ENCODE measurements at regions of chr6 and their contacts with region 1.

Region 1: DNA sequence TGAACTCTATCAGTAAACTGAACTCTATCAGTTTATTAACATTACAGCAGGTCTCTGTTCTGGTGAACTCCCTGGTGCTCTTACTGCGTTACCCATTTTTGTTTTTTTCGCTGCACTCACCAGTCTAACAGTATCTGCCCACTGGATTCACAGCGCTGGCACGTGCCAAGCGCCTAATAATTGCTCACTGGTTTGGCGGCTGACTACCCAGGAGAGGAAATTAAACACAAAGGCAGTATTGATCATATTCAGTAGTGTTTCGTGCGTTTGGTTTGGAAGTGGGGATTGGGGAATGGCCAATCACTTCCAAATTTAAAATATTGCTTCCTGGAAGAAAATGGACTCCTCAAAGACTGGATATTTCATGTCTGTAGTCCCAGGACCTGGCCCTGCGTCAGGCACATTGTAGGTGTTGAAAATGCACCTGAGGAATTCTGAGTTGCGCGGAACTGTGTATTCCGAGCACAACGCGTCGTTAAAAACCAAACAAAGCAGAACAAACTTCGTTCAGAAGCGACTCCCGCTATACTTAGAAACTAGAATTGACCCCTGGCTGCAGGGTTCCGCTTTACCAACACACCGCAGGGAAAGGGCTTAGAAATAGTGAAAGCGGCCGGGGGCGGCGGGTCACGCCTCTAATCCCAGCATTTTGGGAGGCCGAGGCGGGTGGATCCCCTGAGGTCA is 1.1 kb upstream of the RPS12 start:
- DNase-seq: peak; percentile 30
- H3K4me3 Mint-ChIP-seq: peak overlapping the region; percentile 99
- H3K27ac Mint-ChIP-seq: peak overlapping the region; percentile 95
- H3K4me1 Mint-ChIP-seq: peaks cover 29% of the 10 kb centered on the region
- H3K27me3 Mint-ChIP-seq: peaks cover 24% of the 10 kb centered on the region

Region 2: DNA sequence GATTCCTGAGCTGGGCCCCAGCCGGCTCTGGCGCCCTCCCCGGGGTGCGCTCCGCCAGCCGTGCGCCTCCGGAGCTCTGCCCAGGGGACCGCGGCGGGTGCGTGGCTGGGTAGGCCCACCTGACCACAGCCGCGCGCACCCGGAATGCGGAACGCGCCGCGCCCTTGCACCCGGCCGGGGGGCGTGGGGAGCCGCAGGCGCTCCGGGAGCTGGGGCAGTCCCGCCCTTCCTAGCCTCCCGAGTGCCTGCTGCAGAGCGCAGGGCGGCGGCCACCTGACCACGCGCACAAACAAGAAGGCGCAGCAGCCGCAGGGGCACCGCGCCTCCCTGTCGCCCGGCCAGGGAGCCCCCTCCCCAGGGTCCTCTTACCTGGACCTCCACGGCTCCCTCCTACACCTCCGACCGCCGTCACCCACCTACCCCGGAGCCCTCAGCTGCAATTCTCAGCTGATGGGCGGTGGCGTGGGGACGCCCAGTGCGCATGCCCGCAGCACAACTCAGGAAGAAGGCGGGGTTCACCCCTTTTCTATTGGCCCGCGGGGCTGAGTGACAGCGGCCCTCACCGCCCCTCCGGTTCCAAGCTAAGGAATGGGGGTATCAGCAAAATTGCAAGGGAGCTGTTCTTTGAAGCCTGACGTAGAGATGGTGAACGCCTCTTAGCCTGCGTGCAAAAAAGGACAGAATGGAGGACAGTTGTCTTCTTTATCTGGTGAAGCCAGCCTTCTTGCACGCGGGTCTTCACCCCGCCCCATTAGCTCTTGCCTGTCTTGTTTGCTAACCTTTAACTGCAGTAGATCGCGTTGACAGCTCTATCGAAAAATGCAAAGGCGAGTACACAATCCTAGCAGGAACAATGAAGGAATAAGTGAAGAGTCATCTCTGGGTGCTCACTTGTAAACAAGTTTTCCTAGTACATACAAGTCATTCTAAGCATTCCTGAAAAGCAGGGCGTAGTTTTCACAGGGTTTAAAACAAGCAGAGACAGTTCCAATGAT is 300.4 kb before region 1 on chr6 and contains the start of gene STX7:
- intact Hi-C with region 1: loop called (anchors 1 kb)
- DNase-seq: peak; percentile 83
- H3K4me3 Mint-ChIP-seq: peak within 1 kb of the TSS; percentile 97
- H3K27ac Mint-ChIP-seq: peak within 1 kb of the TSS; percentile 88
- H3K4me1 Mint-ChIP-seq: peaks cover 24% of the 10 kb centered on the region
- H3K27me3 Mint-ChIP-seq: peaks cover 21% of the 10 kb centered on the region
- total RNA-seq, gene STX7: 18.9 and 21.5 TPM in 2 replicates

Region 3: DNA sequence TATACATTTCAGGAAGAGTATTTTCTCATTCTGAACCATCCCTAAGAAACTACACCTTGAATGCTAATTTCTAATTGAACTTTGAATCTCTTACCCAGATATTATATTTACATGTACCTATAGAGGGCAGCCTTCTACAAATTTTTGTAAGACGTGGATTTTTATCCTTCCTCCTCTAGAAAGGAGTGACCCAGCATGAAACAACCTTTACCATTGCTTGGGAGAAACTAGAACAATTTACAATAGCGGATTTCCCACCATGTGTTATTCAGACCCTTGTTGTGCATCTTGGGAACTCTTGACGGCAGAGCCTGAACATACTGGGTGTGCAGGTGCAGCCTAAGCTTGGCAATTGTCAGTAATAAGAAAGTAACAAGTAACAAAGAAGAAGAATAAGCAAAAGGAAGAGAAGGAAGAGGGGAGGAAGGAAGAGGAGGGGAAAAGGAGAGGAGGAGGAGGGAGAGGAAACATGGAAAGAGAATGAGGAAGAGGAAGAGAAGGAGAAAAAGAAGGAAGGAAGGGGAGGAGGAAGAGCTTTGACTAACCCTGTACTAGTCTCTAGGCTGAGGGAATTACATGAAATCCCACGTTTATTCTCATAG is 143.5 kb before region 1 on chr6:
- intact Hi-C with region 1: loop called (anchors 5 kb)
- DNase-seq: no peak
- H3K4me3 Mint-ChIP-seq: no peak overlapping the region
- H3K27ac Mint-ChIP-seq: no peak overlapping the region
- H3K4me1 Mint-ChIP-seq: peaks cover 6% of the 10 kb centered on the region
- H3K27me3 Mint-ChIP-seq: peaks cover 22% of the 10 kb centered on the region

Region 4: GRCh38 chr6:132798869-132799538 is 14.3 kb before region 1 on chr6:
- intact Hi-C with region 1: loop called (anchors 1 kb)
- DNase-seq: peak; percentile 53
- H3K4me3 Mint-ChIP-seq: peak overlapping the region; percentile 90
- H3K27ac Mint-ChIP-seq: no peak overlapping the region
- H3K4me1 Mint-ChIP-seq: peaks cover 6% of the 10 kb centered on the region
- H3K27me3 Mint-ChIP-seq: peaks cover 8% of the 10 kb centered on the region

Region 5: GRCh38 chr6:133159255-133159795 is 346.0 kb after region 1 on chr6:
- intact Hi-C with region 1: no loop called
- DNase-seq: no peak
- H3K4me3 Mint-ChIP-seq: no peak overlapping the region
- H3K27ac Mint-ChIP-seq: no peak overlapping the region
- H3K4me1 Mint-ChIP-seq: no peaks in the 10 kb centered on the region
- H3K27me3 Mint-ChIP-seq: no peaks in the 10 kb centered on the region

Region 6: DNA sequence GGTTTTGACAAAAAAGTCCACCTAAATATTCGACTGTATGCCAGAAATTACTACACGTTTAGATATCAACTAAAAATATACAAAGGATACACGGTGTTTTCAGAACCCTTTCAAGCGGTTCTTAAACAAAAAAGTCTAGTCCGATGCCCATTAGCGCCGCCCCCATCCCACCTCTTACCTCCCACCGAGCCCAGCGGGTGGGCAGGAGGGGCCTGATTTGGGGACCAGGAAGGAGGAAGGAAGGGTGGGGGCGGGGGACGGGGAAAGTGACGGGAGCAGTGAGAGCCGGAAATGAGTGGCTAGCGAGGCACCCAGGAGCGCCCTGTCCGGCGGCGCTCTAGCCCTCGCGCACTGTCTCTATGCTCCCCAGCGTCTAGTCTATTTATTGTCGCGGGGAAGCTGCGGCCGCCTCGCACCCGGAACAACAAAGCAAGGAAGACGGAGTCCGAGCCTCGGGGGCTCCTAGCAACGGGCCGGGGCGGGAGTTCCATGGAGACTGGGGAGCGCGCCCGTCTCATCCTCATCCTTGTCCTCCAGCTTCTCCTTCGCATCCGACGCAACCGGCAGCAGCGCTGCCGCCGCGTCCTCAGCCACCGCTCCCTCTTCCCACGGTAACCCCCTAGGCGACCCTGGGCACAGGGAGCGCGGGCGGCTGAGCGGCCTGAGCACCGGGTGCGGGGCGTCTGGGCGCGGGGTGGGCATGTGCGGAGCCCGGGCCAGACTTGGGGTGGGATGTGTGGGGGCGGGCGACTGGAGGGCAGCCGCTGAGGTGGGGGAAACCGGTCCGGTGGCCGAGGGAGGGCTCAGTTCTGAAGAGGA is 1139.7 kb after region 1 on chr6 and contains the start of gene TBPL1:
- intact Hi-C with region 1: loop called (anchors 2 kb)
- DNase-seq: peak; percentile 75
- H3K4me3 Mint-ChIP-seq: peak within 1 kb of the TSS; percentile 94
- H3K27ac Mint-ChIP-seq: peak within 1 kb of the TSS; percentile 88
- H3K4me1 Mint-ChIP-seq: peaks cover 42% of the 10 kb centered on the region
- H3K27me3 Mint-ChIP-seq: peaks cover 12% of the 10 kb centered on the region
- total RNA-seq, gene TBPL1: 29.7 and 31.2 TPM in 2 replicates

Measured in activated T-helper 2 cell treated with anti-CD3 and anti-CD28 coated beads, Interferon-gamma antibody, Interleukin-2, Interleukin-4, amounts not matched to agents 10 μg/mL and 5 μg/mL and 100 μg/mL, durations not matched to agents 14 hours and 24 hours and 36 hours (primary cell).